ENCODE measurements at regions of chr14 and their contacts with region 1.

Region 1: DNA sequence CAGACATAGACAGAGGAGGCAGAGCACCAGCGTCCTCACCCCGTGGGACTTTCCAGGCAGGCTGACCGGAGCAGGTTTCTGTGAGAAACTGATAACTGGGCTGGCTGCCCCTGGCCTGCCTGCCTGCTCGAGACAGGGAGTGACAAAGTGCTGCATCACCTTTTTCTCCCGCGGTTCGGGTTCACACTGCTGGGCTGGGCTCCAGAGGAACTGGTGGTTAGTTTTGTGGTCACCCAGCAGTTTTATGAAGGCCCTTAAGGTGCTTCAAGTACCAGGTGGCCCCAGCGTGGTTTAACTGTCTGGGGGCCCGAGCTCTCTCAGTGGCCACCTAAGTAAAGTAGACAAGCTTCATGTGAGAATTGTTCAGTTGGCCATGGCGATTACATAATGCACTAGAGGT is 1073.6 kb downstream of the BCL11B start:
- DNase-seq: peak; percentile 51
- H3K4me3 Mint-ChIP-seq: peak overlapping the region; percentile 27
- H3K27ac Mint-ChIP-seq: peak overlapping the region; percentile 52
- H3K4me1 Mint-ChIP-seq: peaks cover 95% of the 10 kb centered on the region
- H3K27me3 Mint-ChIP-seq: no peaks in the 10 kb centered on the region

Region 2: DNA sequence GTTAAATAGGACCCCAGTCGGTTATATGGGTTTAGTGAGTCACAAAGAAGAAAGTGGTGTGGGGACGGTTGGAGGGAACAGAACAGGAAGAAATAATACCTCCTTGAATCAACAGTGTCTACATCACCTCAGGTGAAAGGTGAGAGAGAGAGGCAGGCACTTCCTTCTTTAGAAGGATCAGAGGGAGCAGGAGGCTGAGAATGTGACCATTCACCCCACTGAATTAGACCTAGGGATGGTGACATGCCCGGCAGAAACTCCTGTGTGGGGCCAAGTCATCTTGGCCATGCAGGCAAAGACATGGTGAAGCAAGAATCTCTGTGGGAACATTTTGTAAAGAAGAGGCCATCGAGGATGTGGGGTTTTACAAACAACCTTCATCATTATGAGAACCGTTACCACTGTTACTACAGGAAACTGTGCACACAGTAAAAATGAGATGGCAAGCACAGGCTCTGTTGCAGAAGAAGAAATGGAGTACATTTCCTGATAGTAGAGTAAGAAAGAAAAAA is 204.3 kb before region 1 on chr14:
- intact Hi-C with region 1: no loop called
- DNase-seq: peak; percentile 37
- H3K4me3 Mint-ChIP-seq: peak overlapping the region; percentile 21
- H3K27ac Mint-ChIP-seq: peak overlapping the region; percentile 88
- H3K4me1 Mint-ChIP-seq: peaks cover 47% of the 10 kb centered on the region
- H3K27me3 Mint-ChIP-seq: no peaks in the 10 kb centered on the region

Region 3: DNA sequence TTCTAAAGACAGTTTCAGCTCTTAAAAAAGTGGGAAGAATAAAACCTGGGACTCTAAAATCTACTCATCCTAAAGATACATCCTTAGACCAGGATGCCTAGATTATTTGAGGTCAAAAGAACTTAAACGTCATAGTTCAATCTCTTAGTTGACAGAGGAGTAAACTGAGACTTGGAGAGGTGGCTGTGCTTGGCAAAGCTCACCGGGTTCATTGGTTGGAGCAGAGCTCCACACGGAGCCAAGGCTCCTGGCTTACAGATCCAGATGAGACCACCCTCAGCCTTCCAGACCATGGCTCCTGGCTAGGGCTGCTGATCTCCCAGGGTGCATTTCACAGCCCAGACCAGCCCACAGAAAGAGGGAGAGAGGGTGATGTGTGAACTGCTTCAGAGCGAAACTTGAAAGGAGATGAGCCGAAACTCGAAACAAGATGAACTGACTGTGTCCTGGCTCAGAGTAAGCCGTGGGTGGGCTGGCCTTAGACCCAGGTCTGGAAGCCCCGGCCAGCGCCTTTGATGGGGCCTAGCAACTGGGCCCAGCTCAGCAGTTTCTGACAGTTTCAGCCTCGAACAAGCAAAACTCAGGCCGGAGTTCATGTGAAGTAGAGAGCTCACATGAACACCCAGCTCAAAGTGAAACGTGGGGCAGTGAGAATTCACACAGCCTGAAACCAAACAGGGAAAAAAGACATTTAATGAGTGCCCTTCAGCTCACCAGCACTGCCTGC is 28.8 kb after region 1 on chr14:
- intact Hi-C with region 1: loop called (anchors 2 kb)
- DNase-seq: peak; percentile 36
- H3K4me3 Mint-ChIP-seq: peak overlapping the region; percentile 54
- H3K27ac Mint-ChIP-seq: peak overlapping the region; percentile 81
- H3K4me1 Mint-ChIP-seq: peaks cover 63% of the 10 kb centered on the region
- H3K27me3 Mint-ChIP-seq: no peaks in the 10 kb centered on the region

Measured in activated T-helper 1 cell treated with anti-CD3 and anti-CD28 coated beads, Interleukin-12 subunit alpha, Interleukin-12 subunit beta, Interleukin-2, Interleukin-4 antibody, amounts not matched to agents 30 ng/mL and 10 ng/mL and 1 ng/mL, durations not matched to agents 14 hours and 24 hours and 36 hours (primary cell).